ENCODE measurements at regions of chr7 and their contacts with region 1.

Region 1: DNA sequence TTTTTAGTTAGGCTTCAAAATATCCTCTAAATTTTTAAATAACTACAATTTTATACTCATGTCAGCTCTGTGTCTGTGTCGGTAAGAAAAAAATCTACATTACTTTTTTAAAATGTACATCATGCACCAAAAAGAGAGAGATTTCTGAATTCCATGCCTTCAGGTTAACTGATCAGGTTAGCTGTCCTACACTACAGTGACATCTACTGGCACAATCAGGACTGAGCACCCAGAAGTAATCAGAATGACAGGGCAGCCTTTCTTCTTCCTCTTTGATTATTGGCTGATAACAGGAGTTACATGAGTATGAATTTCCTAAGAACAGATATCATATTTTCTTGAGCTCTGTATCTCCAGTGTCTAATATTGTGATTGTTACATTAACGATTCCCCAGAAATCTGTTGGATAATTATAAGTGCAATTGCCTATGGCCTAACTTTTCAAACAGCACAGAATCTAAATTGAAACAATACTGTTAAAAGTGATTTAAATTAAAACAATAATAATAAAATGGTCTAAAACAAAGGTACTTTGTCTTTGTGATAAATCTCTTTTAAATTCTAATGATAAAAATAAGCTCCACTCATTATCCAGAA is 41.8 kb upstream of the HYCC1 start:
- DNase-seq: peak; percentile 74
- ATAC-seq: peak; percentile 97
- H3K4me3 Mint-ChIP-seq: no peak overlapping the region
- H3K27ac Mint-ChIP-seq: no peak overlapping the region
- H3K4me1 Mint-ChIP-seq: peaks cover under 1% of the 10 kb centered on the region
- H3K27me3 Mint-ChIP-seq: no peaks in the 10 kb centered on the region
- CTCF ChIP-seq: peak; percentile 96

Region 2: DNA sequence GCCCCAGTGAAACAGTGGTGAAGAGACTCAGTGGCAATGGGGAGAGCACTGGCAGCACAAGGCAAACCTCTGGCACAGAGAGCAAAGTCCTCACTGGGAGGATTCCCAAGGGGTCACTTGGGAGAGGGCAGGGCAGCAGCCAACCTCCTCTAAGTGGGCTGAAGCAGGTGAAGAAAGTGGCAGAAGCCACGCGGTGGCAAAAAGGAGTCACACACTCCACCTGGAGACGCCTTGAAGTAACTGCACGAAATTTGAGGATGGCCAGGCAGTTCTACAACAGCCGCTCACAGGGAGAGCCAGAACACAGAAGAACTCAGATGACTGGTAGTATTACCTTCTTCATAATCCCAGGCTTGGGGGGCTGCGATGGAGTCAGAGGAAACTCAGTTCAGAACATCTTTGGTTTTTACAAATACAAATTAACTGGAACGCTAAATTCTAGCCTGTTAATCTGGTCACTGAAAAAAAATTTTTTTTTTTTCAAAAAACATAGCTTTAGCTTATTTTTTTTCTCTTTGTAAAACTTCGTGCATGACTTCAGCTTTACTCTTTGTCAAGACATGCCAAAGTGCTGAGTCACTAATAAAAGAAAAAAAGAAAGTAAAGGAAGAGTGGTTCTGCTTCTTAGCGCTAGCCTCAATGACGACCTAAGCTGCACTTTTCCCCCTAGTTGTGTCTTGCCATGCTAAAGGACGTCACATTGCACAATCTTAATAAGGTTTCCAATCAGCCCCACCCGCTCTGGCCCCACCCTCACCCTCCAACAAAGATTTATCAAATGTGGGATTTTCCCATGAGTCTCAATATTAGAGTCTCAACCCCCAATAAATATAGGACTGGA is 329.1 kb before region 1 on chr7:
- CTCF ChIA-PET with region 1: interaction called, 35 read pairs
- POLR2A ChIA-PET with region 1: no interaction called
- intact Hi-C with region 1: loop called (anchors 5 kb)
- DNase-seq: peak; percentile 70
- ATAC-seq: peak; percentile 94
- H3K4me3 Mint-ChIP-seq: peak overlapping the region; percentile 25
- H3K27ac Mint-ChIP-seq: no peak overlapping the region
- H3K4me1 Mint-ChIP-seq: peaks cover 23% of the 10 kb centered on the region
- H3K27me3 Mint-ChIP-seq: peaks cover 46% of the 10 kb centered on the region
- CTCF ChIP-seq: peak; percentile 59

Region 3: DNA sequence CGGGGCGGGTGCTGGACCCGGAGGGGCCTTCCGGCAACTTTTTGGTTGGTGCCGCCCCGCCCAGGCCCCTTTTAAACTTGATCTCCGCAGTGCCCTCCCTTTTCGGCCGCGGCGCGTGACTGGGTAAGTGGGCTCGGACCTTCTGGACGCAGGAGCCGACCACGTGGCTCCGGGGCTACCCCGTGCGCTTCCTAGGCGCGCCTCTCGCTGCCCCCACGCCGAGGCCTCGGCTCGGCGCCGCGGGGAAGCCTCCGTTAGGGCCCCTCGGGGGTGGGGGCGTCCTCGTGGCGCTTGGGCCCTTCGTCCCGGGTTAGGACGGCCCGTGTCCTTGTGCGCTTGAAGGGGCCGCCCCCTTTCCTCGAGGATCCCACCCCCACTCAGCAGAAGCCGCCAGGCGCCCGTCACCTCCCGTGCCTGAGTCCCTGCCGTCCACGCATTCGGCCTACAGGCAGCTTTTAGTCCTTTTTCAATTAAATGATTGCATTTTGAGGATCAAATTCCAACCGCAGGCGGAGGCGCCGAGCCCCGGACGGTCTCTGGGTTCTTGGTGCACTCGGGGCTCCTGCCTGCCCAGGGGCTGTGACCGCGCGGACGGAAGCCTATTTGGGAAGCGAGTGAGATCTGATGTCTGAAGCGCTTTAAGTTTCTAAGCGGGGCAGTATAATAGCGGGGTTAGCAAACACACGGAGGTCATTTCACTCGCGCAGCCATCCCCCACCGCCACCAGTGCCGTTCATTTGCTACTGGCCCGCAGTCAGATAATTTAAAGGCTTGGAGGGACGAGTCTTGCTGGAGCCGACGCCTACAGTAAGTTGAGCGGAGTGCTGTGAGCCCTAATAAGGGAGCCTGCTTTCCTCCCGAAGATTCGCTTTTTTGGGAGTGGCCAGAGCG is 201.3 kb before region 1 on chr7:
- CTCF ChIA-PET with region 1: interaction called, 48 read pairs
- POLR2A ChIA-PET with region 1: interaction called, 4 read pairs
- intact Hi-C with region 1: loop called (anchors 2 kb)
- DNase-seq: peak; percentile 87
- ATAC-seq: peak; percentile 82
- H3K4me3 Mint-ChIP-seq: peak overlapping the region; percentile 88
- H3K27ac Mint-ChIP-seq: peak overlapping the region; percentile 85
- H3K4me1 Mint-ChIP-seq: peaks cover 33% of the 10 kb centered on the region
- H3K27me3 Mint-ChIP-seq: no peaks in the 10 kb centered on the region
- CTCF ChIP-seq: peak; percentile 87

Region 4: GRCh38 chr7:22872096-22872807 is 183.4 kb before region 1 on chr7:
- CTCF ChIA-PET with region 1: interaction called, 20 read pairs
- POLR2A ChIA-PET with region 1: no interaction called
- intact Hi-C with region 1: no loop called
- DNase-seq: no peak
- ATAC-seq: peak; percentile 61
- H3K4me3 Mint-ChIP-seq: no peak overlapping the region
- H3K27ac Mint-ChIP-seq: no peak overlapping the region
- H3K4me1 Mint-ChIP-seq: peaks cover 5% of the 10 kb centered on the region
- H3K27me3 Mint-ChIP-seq: no peaks in the 10 kb centered on the region
- CTCF ChIP-seq: no peak

Region 5: DNA sequence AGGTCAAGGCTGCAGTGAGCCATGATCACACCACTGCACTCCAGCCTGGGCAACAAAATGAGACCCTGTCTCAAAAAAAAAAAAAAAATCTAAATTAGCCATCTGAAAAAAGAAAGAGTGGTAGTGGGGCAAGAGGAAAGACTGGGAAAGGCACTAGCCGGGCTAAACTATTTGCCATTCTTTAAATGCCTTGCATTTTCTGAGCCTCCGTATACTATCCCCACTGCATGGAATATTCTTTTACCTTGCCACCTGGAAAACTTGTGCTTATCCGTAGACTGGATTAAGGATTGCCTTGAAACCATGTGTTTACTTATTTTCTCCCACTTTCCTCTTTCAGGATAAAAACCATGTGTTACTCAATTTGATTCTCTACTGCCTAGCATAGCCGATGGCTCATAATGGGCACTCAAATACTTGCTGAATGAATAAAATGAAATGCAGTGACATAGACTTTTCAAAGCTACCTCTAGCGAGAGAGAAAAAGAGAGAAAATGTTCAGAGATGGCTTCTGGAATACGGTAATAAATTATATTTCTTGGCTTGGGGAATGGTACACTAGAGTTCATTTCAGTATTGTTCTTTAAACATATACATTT is 72.3 kb before region 1 on chr7:
- CTCF ChIA-PET with region 1: interaction called, 11 read pairs
- POLR2A ChIA-PET with region 1: no interaction called
- intact Hi-C with region 1: no loop called
- DNase-seq: no peak
- ATAC-seq: no peak
- H3K4me3 Mint-ChIP-seq: no peak overlapping the region
- H3K27ac Mint-ChIP-seq: no peak overlapping the region
- H3K4me1 Mint-ChIP-seq: peaks cover 3% of the 10 kb centered on the region
- H3K27me3 Mint-ChIP-seq: no peaks in the 10 kb centered on the region
- CTCF ChIP-seq: no peak

Region 6: DNA sequence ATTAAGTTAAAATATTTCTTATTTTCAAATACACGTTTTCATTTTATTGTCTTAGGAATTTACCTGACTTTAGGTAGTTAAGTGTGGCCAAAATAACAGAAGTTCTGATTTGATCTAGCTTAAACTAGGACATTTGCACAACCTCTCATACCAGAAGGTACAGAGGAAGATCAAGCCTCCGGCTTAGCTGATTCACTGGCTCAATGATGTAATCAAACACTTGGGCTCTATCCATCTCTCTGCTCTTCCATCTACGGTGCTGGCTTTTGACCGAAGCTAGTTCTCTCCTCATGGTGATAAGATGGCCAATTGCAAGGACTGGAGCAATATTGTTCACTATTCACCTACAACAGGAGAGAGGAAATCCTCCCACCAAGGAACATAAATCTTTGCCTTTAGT is 29.5 kb before region 1 on chr7:
- CTCF ChIA-PET with region 1: interaction called, 15 read pairs
- POLR2A ChIA-PET with region 1: interaction called, 4 read pairs
- intact Hi-C with region 1: no loop called
- DNase-seq: no peak
- ATAC-seq: no peak
- H3K4me3 Mint-ChIP-seq: no peak overlapping the region
- H3K27ac Mint-ChIP-seq: no peak overlapping the region
- H3K4me1 Mint-ChIP-seq: peaks cover 14% of the 10 kb centered on the region
- H3K27me3 Mint-ChIP-seq: peaks cover 23% of the 10 kb centered on the region
- CTCF ChIP-seq: no peak

Region 7: DNA sequence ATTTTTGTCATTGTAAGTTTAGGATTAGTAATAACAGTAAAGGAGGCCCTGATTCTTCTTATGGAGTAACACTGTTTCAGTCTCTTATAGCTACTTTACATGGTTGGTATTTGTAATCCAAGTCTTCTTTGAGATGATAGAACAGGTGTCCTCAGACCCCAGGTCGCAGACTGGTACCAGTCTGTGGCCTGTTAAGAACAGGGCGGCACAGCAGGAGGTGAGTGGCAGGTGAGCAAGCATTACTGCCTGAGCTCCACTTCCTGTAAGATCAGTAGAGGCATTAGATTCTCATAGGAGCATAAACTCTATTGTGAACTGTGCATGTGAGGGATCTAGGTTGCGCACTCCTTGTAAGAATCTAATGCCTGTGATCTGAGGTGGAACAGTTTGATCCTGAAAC is 731.6 kb after region 1 on chr7:
- CTCF ChIA-PET with region 1: no interaction called
- POLR2A ChIA-PET with region 1: no interaction called
- intact Hi-C with region 1: no loop called
- DNase-seq: no peak
- ATAC-seq: no peak
- H3K4me3 Mint-ChIP-seq: no peak overlapping the region
- H3K27ac Mint-ChIP-seq: no peak overlapping the region
- H3K4me1 Mint-ChIP-seq: peaks cover 4% of the 10 kb centered on the region
- H3K27me3 Mint-ChIP-seq: no peaks in the 10 kb centered on the region
- CTCF ChIP-seq: no peak